SK-N-SH (cell line): ENCODE measurements at regions of chr17 and their contacts with region 1.

Region 1: GRCh38 chr17:17752089-17752820 is 71.0 kb downstream of the RAI1 start:
- DNase-seq: peak; percentile 94
- H3K4me3 ChIP-seq: peak overlapping the region; percentile 19 to 34; a peak in 2 of 4 replicates
- H3K27ac ChIP-seq: peak overlapping the region; percentile 52 to 83; a peak in 3 of 4 replicates
- H3K4me1 ChIP-seq: peaks cover 24 to 77% of the 10 kb centered on the region in 2 experiments
- H3K27me3 ChIP-seq: no peaks in the 10 kb centered on the region
- CTCF ChIP-seq: peak; percentile 25; the same call in 1 of the 2 replicates
- EP300 ChIP-seq: no peak
- RAD21 ChIP-seq: no peak; the same call in 1 of the 2 replicates

Region 2: GRCh38 chr17:17672453-17673368 is 79.5 kb before region 1 on chr17:
- CTCF ChIA-PET with region 1: no interaction called
- POLR2A ChIA-PET with region 1: no interaction called
- DNase-seq: no peak
- H3K4me3 ChIP-seq: no peak overlapping the region
- H3K27ac ChIP-seq: no peak overlapping the region
- H3K4me1 ChIP-seq: peaks cover 0 to 21% of the 10 kb centered on the region in 2 experiments; a peak in 1 of 4 replicates
- H3K27me3 ChIP-seq: no peaks in the 10 kb centered on the region
- CTCF ChIP-seq: no peak
- EP300 ChIP-seq: no peak
- RAD21 ChIP-seq: no peak

Region 3: DNA sequence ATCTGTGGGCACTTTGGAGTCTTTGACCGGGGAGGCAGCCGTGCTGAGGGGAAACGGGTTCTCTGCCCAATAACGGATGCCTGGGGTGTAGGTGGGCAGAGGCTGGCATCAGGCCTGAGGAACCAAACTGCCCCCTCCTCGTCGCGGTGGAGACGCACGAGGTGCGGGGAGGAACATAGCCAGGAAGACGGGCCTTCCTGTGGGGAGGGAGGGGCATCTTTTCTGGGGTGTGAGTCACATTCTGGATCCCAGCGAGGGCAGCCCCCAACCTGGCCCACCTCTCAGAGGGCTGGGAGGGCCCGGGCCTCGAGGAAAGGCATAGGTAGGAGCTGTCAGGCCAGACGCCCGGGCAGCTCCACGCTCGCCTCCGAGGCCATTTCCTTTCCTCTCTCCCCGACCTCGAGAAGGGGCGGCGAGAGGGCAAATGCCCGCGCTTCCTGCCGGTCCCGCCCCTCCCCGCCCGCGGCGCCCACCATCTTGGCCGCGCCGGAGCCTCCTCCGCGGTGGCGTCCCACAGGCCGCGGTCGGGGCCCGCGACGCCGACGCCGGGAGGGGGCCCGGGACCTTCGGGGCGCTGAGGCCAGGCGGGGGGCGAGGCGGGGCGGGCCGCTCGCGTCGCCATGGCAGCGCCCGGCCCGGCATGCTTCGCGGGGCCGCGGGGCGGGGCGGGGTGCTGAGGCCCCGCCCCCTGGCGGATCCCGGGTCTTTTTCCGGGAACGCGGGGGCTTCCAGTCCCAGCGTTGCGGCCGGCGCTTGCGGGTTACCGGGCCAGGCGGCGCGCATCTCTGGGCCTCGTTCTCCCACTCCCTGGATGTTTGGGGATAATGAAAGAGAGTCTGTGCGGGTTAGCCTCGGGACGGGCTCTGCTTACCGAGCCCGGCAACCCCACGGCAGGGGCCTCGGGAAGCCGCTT is 57.8 kb before region 1 on chr17:
- CTCF ChIA-PET with region 1: interaction called, 11 read pairs
- POLR2A ChIA-PET with region 1: interaction called, 6 read pairs
- DNase-seq: peak; percentile 95
- H3K4me3 ChIP-seq: peak overlapping the region; percentile 68 to 79
- H3K27ac ChIP-seq: peak overlapping the region; percentile 95 to 99
- H3K4me1 ChIP-seq: peaks cover 65 to 85% of the 10 kb centered on the region in 2 experiments
- H3K27me3 ChIP-seq: no peaks in the 10 kb centered on the region
- CTCF ChIP-seq: no peak
- EP300 ChIP-seq: no peak
- RAD21 ChIP-seq: no peak

Region 4: GRCh38 chr17:17739388-17740066 is 12.7 kb before region 1 on chr17:
- CTCF ChIA-PET with region 1: interaction called, 29 read pairs
- POLR2A ChIA-PET with region 1: interaction called, 17 read pairs
- DNase-seq: peak; percentile 78
- H3K4me3 ChIP-seq: no peak overlapping the region; a peak in 1 of 4 replicates
- H3K27ac ChIP-seq: peak overlapping the region; percentile 11 to 91; a peak in 3 of 4 replicates
- H3K4me1 ChIP-seq: peaks cover 44 to 71% of the 10 kb centered on the region in 2 experiments
- H3K27me3 ChIP-seq: no peaks in the 10 kb centered on the region
- CTCF ChIP-seq: no peak
- EP300 ChIP-seq: peak in 1 of 2 experiments; percentile 36; a peak in 3 of 4 replicates
- RAD21 ChIP-seq: no peak; the same call in 1 of the 2 replicates